ENCODE measurements at regions of chr15 and their contacts with region 1.

Region 1: GRCh38 chr15:60408438-60409105 is 10.8 kb upstream of the ANXA2 start:
- DNase-seq: peak; percentile 95
- H3K4me3 Mint-ChIP-seq: peak overlapping the region; percentile 2
- H3K27ac Mint-ChIP-seq: peak overlapping the region; percentile 87
- H3K4me1 Mint-ChIP-seq: peaks cover 28% of the 10 kb centered on the region
- H3K27me3 Mint-ChIP-seq: no peaks in the 10 kb centered on the region
- CTCF ChIP-seq: no peak

Region 2: GRCh38 chr15:60423537-60423936 is 15.0 kb after region 1 on chr15:
- CTCF ChIA-PET with region 1: interaction called, 5 read pairs
- POLR2A ChIA-PET with region 1: interaction called, 376 read pairs
- intact Hi-C with region 1: loop called (anchors 2 kb)
- DNase-seq: peak; percentile 66
- H3K4me3 Mint-ChIP-seq: peak overlapping the region; percentile 50
- H3K27ac Mint-ChIP-seq: peak overlapping the region; percentile 92
- H3K4me1 Mint-ChIP-seq: peaks cover 35% of the 10 kb centered on the region
- H3K27me3 Mint-ChIP-seq: no peaks in the 10 kb centered on the region
- CTCF ChIP-seq: no peak

Region 3: GRCh38 chr15:60478566-60479360 is 70.2 kb after region 1 on chr15 and contains the start of gene ICE2:
- CTCF ChIA-PET with region 1: no interaction called
- POLR2A ChIA-PET with region 1: interaction called, 5 read pairs
- intact Hi-C with region 1: loop called (anchors 1 kb)
- DNase-seq: peak; percentile 93
- H3K4me3 Mint-ChIP-seq: peak within 1 kb of the TSS; percentile 90
- H3K27ac Mint-ChIP-seq: peak within 1 kb of the TSS; percentile 96
- H3K4me1 Mint-ChIP-seq: peaks cover 32% of the 10 kb centered on the region
- H3K27me3 Mint-ChIP-seq: no peaks in the 10 kb centered on the region
- CTCF ChIP-seq: no peak
- total RNA-seq, gene ICE2: 55.1 and 57.9 TPM in 2 replicates